A549 (cell line): ENCODE measurements at regions of chr2 and their contacts with region 1.

Region 1: GRCh38 chr2:113080134-113080533 is 12.4 kb downstream of the IL1F10 start:
- DNase-seq: peak; percentile 31 to 32
- ATAC-seq: peak; percentile 70 to 91; a peak in 5 of 6 replicates
- H3K4me3 ChIP-seq: no peak overlapping the region
- H3K27ac ChIP-seq: no peak overlapping the region
- H3K4me1 ChIP-seq: peaks cover 3% of the 10 kb centered on the region; the same call in 1 of the 3 replicates
- CTCF ChIP-seq: peak; percentile 80
- EP300 ChIP-seq: no peak
- POLR2A ChIP-seq: no peak
- RAD21 ChIP-seq: peak; percentile 86 to 88

Region 2: GRCh38 chr2:113041871-113042508 is 38.1 kb before region 1 on chr2:
- CTCF ChIA-PET with region 1: no interaction called
- POLR2A ChIA-PET with region 1: no interaction called
- DNase-seq: peak in 1 of 2 experiments; percentile 11
- ATAC-seq: peak; percentile 47 to 66; a peak in 4 of 6 replicates
- H3K4me3 ChIP-seq: no peak overlapping the region
- H3K27ac ChIP-seq: no peak overlapping the region
- H3K4me1 ChIP-seq: no peaks in the 10 kb centered on the region
- CTCF ChIP-seq: no peak
- EP300 ChIP-seq: no peak
- POLR2A ChIP-seq: no peak
- RAD21 ChIP-seq: peak in 1 of 2 experiments; percentile 10; a peak in 1 of 5 replicates

Region 3: GRCh38 chr2:113068718-113069435 is 11.3 kb before region 1 on chr2:
- CTCF ChIA-PET with region 1: interaction called, 21 read pairs
- POLR2A ChIA-PET with region 1: no interaction called
- DNase-seq: no peak
- ATAC-seq: no peak
- H3K4me3 ChIP-seq: no peak overlapping the region
- H3K27ac ChIP-seq: no peak overlapping the region
- H3K4me1 ChIP-seq: peaks cover 7% of the 10 kb centered on the region; the same call in 1 of the 3 replicates
- CTCF ChIP-seq: no peak
- EP300 ChIP-seq: no peak
- POLR2A ChIP-seq: no peak
- RAD21 ChIP-seq: no peak

Region 4: DNA sequence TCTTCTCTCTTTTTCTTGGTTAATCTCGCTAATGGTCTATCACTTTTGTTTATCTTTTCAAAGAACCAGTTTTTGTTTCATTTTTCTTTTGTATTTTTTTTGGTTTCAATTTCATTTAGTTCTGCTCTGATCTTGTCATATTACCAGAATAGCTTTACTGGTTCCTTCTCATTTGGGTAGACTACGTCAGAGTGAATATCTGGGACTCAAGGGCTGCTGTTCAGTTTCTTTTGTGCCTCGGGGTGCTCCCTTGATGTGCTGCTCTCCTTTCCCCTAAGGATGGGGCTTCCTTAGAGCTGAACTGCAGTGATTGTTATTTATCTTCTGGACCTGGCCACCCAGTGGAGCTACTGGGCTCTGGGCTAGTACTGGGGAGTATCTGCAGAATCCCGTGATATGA is 17.9 kb after region 1 on chr2:
- CTCF ChIA-PET with region 1: interaction called, 44 read pairs
- POLR2A ChIA-PET with region 1: no interaction called
- DNase-seq: no peak
- ATAC-seq: no peak
- H3K4me3 ChIP-seq: no peak overlapping the region
- H3K27ac ChIP-seq: no peak overlapping the region
- H3K4me1 ChIP-seq: no peaks in the 10 kb centered on the region
- CTCF ChIP-seq: no peak
- EP300 ChIP-seq: no peak
- POLR2A ChIP-seq: no peak
- RAD21 ChIP-seq: no peak

Region 5: DNA sequence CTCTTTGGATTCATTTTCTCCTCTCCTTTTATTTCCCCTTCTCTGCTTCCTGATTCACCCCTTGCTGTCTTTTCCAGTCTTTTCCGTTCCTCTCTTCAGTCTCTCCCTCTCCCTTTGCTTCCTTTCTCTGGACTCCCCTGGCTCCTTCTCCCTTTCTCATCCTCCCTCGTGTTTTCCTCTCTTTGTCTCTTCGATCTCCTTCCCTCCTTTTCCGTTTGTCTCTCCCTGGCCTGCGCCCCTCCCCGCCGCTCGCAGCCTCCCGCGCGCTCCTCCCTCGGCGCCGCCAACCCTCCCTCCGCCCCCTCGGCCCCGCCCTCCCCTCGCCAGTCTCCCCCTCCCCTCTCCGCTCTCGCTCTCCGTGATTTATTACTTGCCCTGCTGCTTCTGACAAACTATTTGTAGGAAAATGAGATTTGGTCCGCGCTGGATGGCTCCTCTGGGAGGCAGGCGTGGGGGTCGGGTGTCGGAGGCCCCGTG is 244.6 kb after region 1 on chr2:
- CTCF ChIA-PET with region 1: no interaction called
- POLR2A ChIA-PET with region 1: no interaction called
- DNase-seq: peak; percentile 80 to 85
- ATAC-seq: peak; percentile 67 to 78
- H3K4me3 ChIP-seq: peak overlapping the region; percentile 60
- H3K27ac ChIP-seq: peak overlapping the region; percentile 89 to 92
- H3K4me1 ChIP-seq: peaks cover 51% of the 10 kb centered on the region
- CTCF ChIP-seq: no peak; the same call in 2 of the 3 replicates
- EP300 ChIP-seq: no peak
- POLR2A ChIP-seq: peak; percentile 33
- RAD21 ChIP-seq: no peak